ENCODE measurements at regions of chr10 and their contacts with region 1.

Region 1: GRCh38 chr10:32256613-32257437 is 90.1 kb downstream of the EPC1 start:
- DNase-seq: peak; percentile 24 to 83 (median 55)
- ATAC-seq: peak; percentile 67 to 77 (median 70)
- H3K4me3 ChIP-seq: no peak overlapping the region
- H3K4me3 Mint-ChIP-seq: no peak overlapping the region
- H3K27ac ChIP-seq: no peak overlapping the region
- H3K27ac Mint-ChIP-seq: peak overlapping the region in 1 of 2 donors; percentile 19
- H3K4me1 ChIP-seq: peaks cover 0 to 2% of the 10 kb centered on the region in 2 experiments
- H3K4me1 Mint-ChIP-seq: peaks cover 5 to 7% (median 5%) of the 10 kb centered on the region in 3 donors
- H3K27me3 ChIP-seq: no peaks in the 10 kb centered on the region
- H3K27me3 Mint-ChIP-seq: no peaks in the 10 kb centered on the region

Region 2: GRCh38 chr10:30980951-30981616 is 1275.7 kb before region 1 on chr10:
- CTCF ChIA-PET with region 1: no interaction called
- POLR2A ChIA-PET with region 1: no interaction called
- DNase-seq: no peak
- ATAC-seq: no peak
- H3K4me3 ChIP-seq: no peak overlapping the region
- H3K4me3 Mint-ChIP-seq: no peak overlapping the region
- H3K27ac ChIP-seq: no peak overlapping the region
- H3K27ac Mint-ChIP-seq: no peak overlapping the region
- H3K4me1 ChIP-seq: no peaks in the 10 kb centered on the region
- H3K4me1 Mint-ChIP-seq: peaks cover 0 to 4% (median 0%) of the 10 kb centered on the region in 3 donors
- H3K27me3 ChIP-seq: no peaks in the 10 kb centered on the region
- H3K27me3 Mint-ChIP-seq: no peaks in the 10 kb centered on the region

Region 3: DNA sequence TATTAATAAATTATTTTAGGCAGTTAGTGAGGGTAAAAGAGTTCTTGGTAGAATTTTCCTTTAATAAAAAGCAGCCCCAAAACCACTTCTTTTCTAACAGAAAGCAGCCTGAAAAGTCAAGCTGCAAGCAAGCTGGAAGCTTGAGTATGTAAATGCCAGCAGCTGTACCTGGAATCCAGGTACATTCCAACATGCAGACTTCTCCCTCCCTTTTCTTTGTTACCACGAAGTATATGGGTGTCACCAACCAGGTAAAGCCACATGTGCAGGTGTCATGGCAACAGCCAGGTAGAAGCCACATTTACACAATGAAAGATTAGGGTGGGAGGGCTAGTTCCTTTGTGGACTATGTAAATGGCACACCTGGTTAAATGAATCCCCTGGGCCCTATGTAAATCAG is 24.4 kb before region 1 on chr10:
- CTCF ChIA-PET with region 1: no interaction called
- POLR2A ChIA-PET with region 1: no interaction called
- DNase-seq: no peak
- ATAC-seq: no peak
- H3K4me3 ChIP-seq: no peak overlapping the region
- H3K4me3 Mint-ChIP-seq: no peak overlapping the region
- H3K27ac ChIP-seq: no peak overlapping the region
- H3K27ac Mint-ChIP-seq: no peak overlapping the region
- H3K4me1 ChIP-seq: no peaks in the 10 kb centered on the region
- H3K4me1 Mint-ChIP-seq: no peaks in the 10 kb centered on the region
- H3K27me3 ChIP-seq: peaks cover 0 to 4% of the 10 kb centered on the region in 2 experiments
- H3K27me3 Mint-ChIP-seq: peaks cover 0 to 2% of the 10 kb centered on the region in 2 donors

Region 4: GRCh38 chr10:33174674-33175434 is 918.0 kb after region 1 on chr10:
- CTCF ChIA-PET with region 1: interaction called in 1 of 2 experiments, 11 read pairs
- POLR2A ChIA-PET with region 1: no interaction called
- DNase-seq: no peak
- ATAC-seq: no peak
- H3K4me3 ChIP-seq: no peak overlapping the region
- H3K4me3 Mint-ChIP-seq: no peak overlapping the region
- H3K27ac ChIP-seq: no peak overlapping the region
- H3K27ac Mint-ChIP-seq: no peak overlapping the region
- H3K4me1 ChIP-seq: no peaks in the 10 kb centered on the region
- H3K4me1 Mint-ChIP-seq: no peaks in the 10 kb centered on the region
- H3K27me3 ChIP-seq: peaks cover 0 to 12% of the 10 kb centered on the region in 2 experiments
- H3K27me3 Mint-ChIP-seq: peaks cover 17 to 22% of the 10 kb centered on the region in 2 donors

Region 5: DNA sequence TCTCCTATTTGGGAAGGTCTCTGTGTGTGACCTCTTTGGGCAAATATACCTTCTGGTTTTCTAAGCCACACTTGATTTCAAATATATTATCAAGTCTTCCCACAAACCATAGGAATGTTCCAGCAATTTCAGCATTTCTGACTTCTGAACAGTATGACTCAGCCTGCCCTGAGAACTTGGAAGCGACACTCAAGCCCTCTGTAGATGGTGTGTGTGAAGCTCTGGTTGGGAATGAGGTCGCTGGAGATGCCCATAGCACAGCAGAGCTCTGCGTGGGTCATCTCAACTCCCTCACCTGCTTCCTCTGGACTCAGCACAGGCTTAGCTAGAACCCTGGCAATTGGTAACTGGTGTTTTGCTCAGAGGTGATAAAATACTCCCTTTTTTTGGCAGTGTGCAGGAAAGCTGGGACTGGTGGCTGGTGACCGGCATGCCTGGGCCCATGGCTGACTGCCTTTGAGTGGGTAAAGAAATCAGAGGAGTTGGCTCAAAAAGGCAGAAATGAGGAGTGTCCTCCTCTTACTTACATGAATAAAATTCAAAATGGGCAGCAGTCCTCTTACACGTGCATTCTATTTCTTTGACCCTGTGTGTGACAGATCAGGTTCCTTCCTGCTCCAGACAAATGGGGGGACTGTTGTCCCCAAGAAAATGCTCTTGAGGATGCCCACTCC is 1165.1 kb after region 1 on chr10:
- CTCF ChIA-PET with region 1: no interaction called
- POLR2A ChIA-PET with region 1: no interaction called
- DNase-seq: no peak
- ATAC-seq: no peak
- H3K4me3 ChIP-seq: no peak overlapping the region
- H3K4me3 Mint-ChIP-seq: no peak overlapping the region
- H3K27ac ChIP-seq: no peak overlapping the region
- H3K27ac Mint-ChIP-seq: no peak overlapping the region
- H3K4me1 ChIP-seq: no peaks in the 10 kb centered on the region
- H3K4me1 Mint-ChIP-seq: peaks cover 0 to 2% (median 0%) of the 10 kb centered on the region in 3 donors
- H3K27me3 ChIP-seq: peaks cover 0 to 8% of the 10 kb centered on the region in 2 experiments
- H3K27me3 Mint-ChIP-seq: peaks cover 0 to 9% of the 10 kb centered on the region in 2 donors